ENCODE measurements at regions of chr15 and their contacts with region 1.

Region 1: GRCh38 chr15:68875377-68876116 is 54.8 kb upstream of the SPESP1 start:
- DNase-seq: peak; percentile 26
- H3K4me3 ChIP-seq: peak overlapping the region in 3 of 4 donors; percentile 23 to 54 (median 30)
- H3K27ac ChIP-seq: no peak overlapping the region
- H3K4me1 ChIP-seq: peaks cover 0 to 10% (median 4%) of the 10 kb centered on the region in 3 donors
- H3K27me3 ChIP-seq: peaks cover 0 to 56% (median 0%) of the 10 kb centered on the region in 4 donors
- CTCF ChIP-seq: peak; percentile 84 to 96 (median 91)
- POLR2A ChIP-seq: no peak

Region 2: GRCh38 chr15:68550481-68551295 is 324.9 kb before region 1 on chr15:
- intact Hi-C with region 1: loop called (anchors 5 kb)
- DNase-seq: no peak
- H3K4me3 ChIP-seq: no peak overlapping the region
- H3K27ac ChIP-seq: no peak overlapping the region
- H3K4me1 ChIP-seq: no peaks in the 10 kb centered on the region
- H3K27me3 ChIP-seq: peaks cover 0 to 54% (median 0%) of the 10 kb centered on the region in 4 donors
- CTCF ChIP-seq: peak; percentile 79 to 95 (median 85)
- POLR2A ChIP-seq: no peak

Region 3: DNA sequence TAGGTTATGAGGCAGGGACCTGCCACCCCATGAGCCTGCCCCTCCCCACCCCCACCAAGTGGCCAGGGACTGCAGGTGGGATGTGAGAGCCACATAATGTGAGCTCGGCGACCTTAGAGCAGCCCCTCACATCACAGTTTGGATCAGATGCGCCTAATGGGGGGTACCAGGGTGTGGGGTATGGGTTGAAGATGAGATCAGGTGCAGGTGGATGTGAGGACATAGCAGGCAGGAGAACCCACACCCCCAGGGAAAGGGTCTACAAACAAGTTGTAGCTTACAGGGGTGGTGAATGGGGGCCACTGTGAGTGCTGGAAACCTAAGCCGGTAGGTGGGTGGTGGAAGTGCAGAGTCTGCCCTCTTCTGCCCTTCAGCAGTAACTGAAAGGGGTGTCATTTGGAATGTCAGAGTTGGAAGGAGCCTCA is 202.8 kb before region 1 on chr15:
- intact Hi-C with region 1: loop called (anchors 10 kb)
- DNase-seq: no peak
- H3K4me3 ChIP-seq: no peak overlapping the region
- H3K27ac ChIP-seq: no peak overlapping the region
- H3K4me1 ChIP-seq: peaks cover 0 to 12% (median 0%) of the 10 kb centered on the region in 3 donors
- H3K27me3 ChIP-seq: peaks cover 0 to 23% (median 0%) of the 10 kb centered on the region in 4 donors
- CTCF ChIP-seq: no peak
- POLR2A ChIP-seq: no peak

Region 4: DNA sequence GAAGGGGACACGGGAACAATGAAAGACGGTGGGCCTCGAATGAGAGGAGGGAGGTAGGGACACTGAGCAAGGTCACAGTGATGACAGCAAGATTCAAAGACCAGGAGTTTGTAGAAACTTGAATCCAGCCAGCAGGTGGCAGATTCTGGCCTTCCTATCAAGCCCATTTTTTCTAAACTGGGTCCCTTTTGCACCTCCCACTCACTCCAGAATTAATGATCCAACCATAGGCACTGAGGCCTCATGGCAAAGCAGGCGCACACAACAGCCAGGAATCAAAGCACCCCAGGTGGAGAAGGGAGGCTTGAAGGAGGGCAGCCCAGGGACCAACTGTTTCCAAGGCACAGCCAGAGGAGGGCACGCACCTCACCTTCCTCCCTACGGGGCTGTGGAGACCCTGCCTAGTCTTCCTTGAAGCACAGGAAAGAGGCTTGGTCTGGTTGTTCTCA is 145.1 kb before region 1 on chr15:
- intact Hi-C with region 1: loop called (anchors 5 kb)
- DNase-seq: no peak
- H3K4me3 ChIP-seq: no peak overlapping the region
- H3K27ac ChIP-seq: no peak overlapping the region
- H3K4me1 ChIP-seq: peaks cover 0 to 23% (median 6%) of the 10 kb centered on the region in 3 donors
- H3K27me3 ChIP-seq: peaks cover 0 to 63% (median 0%) of the 10 kb centered on the region in 4 donors
- CTCF ChIP-seq: peak in 5 of 6 experiments; percentile 44 to 64 (median 50)
- POLR2A ChIP-seq: no peak

Region 5: GRCh38 chr15:68783226-68784058 is 92.1 kb before region 1 on chr15:
- intact Hi-C with region 1: loop called (anchors 10 kb)
- DNase-seq: no peak
- H3K4me3 ChIP-seq: no peak overlapping the region
- H3K27ac ChIP-seq: no peak overlapping the region
- H3K4me1 ChIP-seq: peaks cover 8 to 35% (median 14%) of the 10 kb centered on the region in 3 donors
- H3K27me3 ChIP-seq: no peaks in the 10 kb centered on the region
- CTCF ChIP-seq: peak; percentile 57 to 74 (median 72)
- POLR2A ChIP-seq: no peak